ENCODE measurements at regions of chr17 and their contacts with region 1.

Region 1: DNA sequence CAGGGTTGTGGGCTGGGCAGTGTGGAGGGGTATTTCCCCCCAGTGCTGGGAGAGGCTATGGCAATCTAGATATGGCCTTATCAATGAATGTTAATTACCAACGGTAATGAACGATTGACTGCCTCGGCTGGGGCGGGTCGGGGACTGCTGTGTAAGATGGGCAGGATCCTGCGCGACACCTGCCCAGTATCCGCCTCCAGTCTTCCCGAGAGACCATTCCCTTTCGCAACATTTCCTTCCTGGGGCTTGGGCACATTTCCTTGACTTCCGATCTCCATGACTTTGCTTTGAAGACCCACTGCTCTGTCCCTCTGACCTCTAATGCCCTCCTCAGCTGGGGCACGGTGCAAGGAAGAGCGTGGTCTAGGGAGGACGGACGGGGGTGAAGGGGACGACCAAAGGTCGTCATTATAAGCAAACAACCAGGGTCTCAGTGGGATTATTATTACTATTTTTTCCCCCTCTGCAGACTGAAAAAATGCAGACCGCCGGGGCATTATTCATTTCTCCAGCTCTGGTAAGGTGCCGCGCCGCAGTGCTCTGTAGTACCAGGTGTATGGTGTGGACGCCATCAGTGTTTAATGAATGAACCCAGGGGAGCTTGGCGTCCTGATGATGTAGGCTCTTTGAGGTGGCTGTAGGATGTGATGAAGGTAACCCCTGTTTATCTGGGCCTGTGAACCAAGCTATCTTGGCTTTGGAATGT is 506 bp downstream of the ATP5MC1 start:
- DNase-seq: peak in 3 of 10 donors; percentile 8 to 13 (median 13)
- ATAC-seq: peak in 1 of 2 donors; percentile 35
- H3K4me3 Mint-ChIP-seq: peak overlapping the region; percentile 82 to 97 (median 94)
- H3K27ac Mint-ChIP-seq: peak overlapping the region; percentile 92 to 99 (median 96)
- H3K4me1 Mint-ChIP-seq: peaks cover 10 to 42% (median 29%) of the 10 kb centered on the region in 4 donors
- H3K27me3 Mint-ChIP-seq: peaks cover 0 to 2% (median 0%) of the 10 kb centered on the region in 5 donors

Region 2: DNA sequence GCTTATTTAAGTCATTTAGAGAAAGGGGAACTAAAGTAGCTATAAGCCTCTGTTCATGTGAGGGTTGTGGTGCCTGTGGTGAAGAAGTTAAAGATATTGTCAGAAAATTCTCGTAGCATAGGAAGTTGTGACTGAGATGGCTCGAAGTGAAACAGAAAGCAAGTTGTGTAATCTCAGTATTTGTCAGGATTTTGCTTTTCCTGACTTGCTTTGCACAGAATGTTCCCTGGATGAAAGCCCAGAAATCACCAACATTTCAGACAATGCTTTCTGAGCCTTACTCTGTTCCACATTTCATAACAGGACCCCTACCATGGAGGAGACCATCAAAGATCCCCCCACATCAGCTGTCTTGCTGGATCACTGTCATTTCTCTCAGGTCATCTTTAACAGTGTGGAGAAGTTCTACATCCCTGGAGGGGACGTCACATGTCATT is 51.7 kb before region 1 on chr17:
- POLR2A ChIA-PET with region 1: interaction called, 13 read pairs
- DNase-seq: peak in 7 of 10 donors; percentile 6 to 75 (median 38)
- ATAC-seq: peak; percentile 89 to 93
- H3K4me3 Mint-ChIP-seq: peak overlapping the region; percentile 74 to 88 (median 84)
- H3K27ac Mint-ChIP-seq: peak overlapping the region; percentile 63 to 99 (median 95)
- H3K4me1 Mint-ChIP-seq: peaks cover 15 to 61% (median 50%) of the 10 kb centered on the region in 4 donors
- H3K27me3 Mint-ChIP-seq: no peaks in the 10 kb centered on the region

Region 3: GRCh38 chr17:48908047-48908843 is 15.2 kb after region 1 on chr17 and contains the start of gene UBE2Z:
- POLR2A ChIA-PET with region 1: interaction called, 75 read pairs
- DNase-seq: peak; percentile 71 to 93 (median 83)
- ATAC-seq: peak; percentile 85 to 89
- H3K4me3 Mint-ChIP-seq: peak within 1 kb of the TSS; percentile 82 to 98 (median 94)
- H3K27ac Mint-ChIP-seq: peak within 1 kb of the TSS; percentile 97 to 99 (median 98)
- H3K4me1 Mint-ChIP-seq: peaks cover 29 to 52% (median 48%) of the 10 kb centered on the region in 4 donors
- H3K27me3 Mint-ChIP-seq: no peaks in the 10 kb centered on the region
- polyA plus RNA-seq, gene UBE2Z: 58.4 to 76.0 (median 65.2) TPM

Region 4: GRCh38 chr17:48944519-48945260 is 51.6 kb after region 1 on chr17 and contains the start of gene SNF8:
- POLR2A ChIA-PET with region 1: interaction called, 13 read pairs
- DNase-seq: peak; percentile 83 to 94 (median 91)
- ATAC-seq: peak; percentile 94 to 95
- H3K4me3 Mint-ChIP-seq: peak within 1 kb of the TSS; percentile 92 to 99 (median 96)
- H3K27ac Mint-ChIP-seq: peak within 1 kb of the TSS; percentile 93 to 98 (median 96)
- H3K4me1 Mint-ChIP-seq: peaks cover 0 to 30% (median 21%) of the 10 kb centered on the region in 4 donors
- H3K27me3 Mint-ChIP-seq: peaks cover 0 to 3% (median 0%) of the 10 kb centered on the region in 5 donors
- polyA plus RNA-seq, gene SNF8: 104 to 110 (median 105) TPM